ENCODE measurements at regions of chr17 and their contacts with region 1.

Region 1: DNA sequence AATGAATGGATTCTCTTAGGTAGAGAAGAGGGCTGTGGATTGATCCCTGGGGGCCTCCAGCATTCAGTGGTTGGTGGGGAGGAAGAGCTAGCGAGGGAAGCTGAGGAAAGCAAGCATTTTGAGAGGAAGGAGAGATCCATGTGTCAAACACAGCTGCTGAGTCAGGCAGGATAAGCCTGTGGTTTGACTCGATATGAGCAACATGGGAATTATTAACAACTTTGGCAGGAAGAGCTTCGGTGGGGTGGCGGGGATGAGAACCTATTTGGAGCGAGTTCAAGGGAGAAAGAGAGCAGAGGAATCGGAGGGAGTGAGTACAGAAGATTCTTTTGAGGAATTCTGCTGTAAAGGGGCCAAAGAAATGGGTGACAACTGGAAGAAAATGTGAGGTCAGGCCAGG is 59.5 kb upstream of the CDC42EP4 start:
- DNase-seq: no peak
- H3K4me3 ChIP-seq: no peak overlapping the region
- H3K27ac ChIP-seq: no peak overlapping the region
- H3K27me3 ChIP-seq: no peaks in the 10 kb centered on the region
- CTCF ChIP-seq: no peak

Region 2: DNA sequence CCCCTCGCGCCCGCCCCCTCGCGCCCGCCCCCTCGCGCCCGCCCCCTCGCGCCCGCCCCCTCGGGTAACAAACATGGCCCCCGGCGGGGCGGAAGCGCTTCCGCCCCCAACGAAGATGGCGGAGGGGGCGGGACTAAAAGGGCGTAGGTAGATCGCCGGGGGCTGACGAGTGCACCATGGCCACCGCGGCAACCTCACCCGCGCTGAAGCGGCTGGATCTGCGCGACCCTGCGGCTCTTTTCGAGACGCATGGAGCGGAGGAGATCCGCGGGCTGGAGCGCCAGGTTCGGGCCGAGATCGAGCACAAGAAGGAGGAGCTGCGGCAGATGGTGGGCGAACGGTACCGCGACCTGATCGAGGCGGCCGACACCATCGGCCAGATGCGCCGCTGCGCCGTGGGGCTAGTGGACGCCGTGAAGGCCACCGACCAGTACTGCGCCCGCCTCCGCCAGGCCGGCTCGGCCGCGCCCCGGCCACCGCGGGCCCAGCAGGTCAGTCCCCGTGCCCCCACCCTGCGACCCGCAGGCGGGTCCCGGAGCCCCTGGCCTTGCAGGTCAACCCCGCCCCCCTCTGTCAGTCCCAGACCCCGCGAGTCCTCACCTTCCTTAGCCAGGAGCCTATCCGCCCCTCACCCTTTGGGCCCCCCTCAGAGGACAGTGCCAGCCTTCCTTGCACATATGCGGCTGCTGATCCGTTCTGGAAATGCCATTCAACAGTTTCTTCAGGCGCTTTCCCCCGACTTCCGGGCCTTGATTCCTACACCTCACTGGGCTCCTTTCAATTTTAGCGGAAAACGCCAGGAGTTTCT is 178.2 kb before region 1 on chr17 and contains the start of gene COG1:
- intact Hi-C with region 1: loop called in 1 of 2 experiments (anchors 2 kb)
- DNase-seq: peak; percentile 51 to 85 (median 74)
- H3K4me3 ChIP-seq: peak within 1 kb of the TSS; percentile 73 to 100 (median 95)
- H3K27ac ChIP-seq: peak within 1 kb of the TSS; percentile 47 to 94 (median 86)
- H3K27me3 ChIP-seq: no peaks in the 10 kb centered on the region
- CTCF ChIP-seq: peak in 6 of 56 donors; percentile 3 to 39 (median 11)
- total RNA-seq, gene COG1: 48.4 to 137 (median 85.4) TPM

Region 3: DNA sequence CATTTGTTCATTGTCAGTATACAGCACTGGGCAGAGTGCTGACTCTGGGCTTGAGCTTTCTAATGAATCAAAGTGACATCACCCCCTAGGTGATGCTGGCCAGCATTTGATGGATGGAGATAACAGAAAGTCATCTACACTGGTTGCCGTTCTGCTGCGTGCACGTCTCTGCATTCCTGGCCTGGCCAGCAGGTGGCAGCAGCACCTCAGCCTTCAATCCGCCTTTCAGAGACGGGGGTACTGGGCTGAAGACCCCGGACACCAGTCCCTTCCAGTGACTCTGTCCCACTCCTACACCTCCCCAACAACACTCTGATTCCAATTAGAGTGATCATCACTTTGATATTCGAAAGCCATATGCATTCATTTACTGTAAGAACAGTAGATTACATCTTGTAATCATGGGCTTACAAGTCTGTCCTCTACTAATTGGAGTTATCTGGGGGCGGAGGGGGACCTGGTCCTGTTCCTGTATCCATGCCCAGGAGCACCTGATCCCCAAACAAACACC is 115.6 kb before region 1 on chr17:
- intact Hi-C with region 1: loop called (anchors 1 kb)
- DNase-seq: peak in 8 of 10 donors; percentile 61 to 78 (median 71)
- H3K4me3 ChIP-seq: peak overlapping the region in 1 of 59 donors; percentile 12
- H3K27ac ChIP-seq: peak overlapping the region in 2 of 59 donors; percentile 24 to 26
- H3K27me3 ChIP-seq: no peaks in the 10 kb centered on the region
- CTCF ChIP-seq: peak; percentile 94 to 100 (median 99)

Measured in dorsolateral prefrontal cortex (tissue), 120 donors.